Breast epithelium (tissue), 4 donors: ENCODE measurements at regions of chr6 and their contacts with region 1.

Region 1: GRCh38 chr6:9745476-9745875 is 669.4 kb downstream of the TFAP2A start:
- DNase-seq: no peak
- H3K4me3 ChIP-seq: no peak overlapping the region
- H3K27ac ChIP-seq: no peak overlapping the region
- H3K4me1 ChIP-seq: no peaks in the 10 kb centered on the region
- H3K27me3 ChIP-seq: no peaks in the 10 kb centered on the region
- CTCF ChIP-seq: no peak
- POLR2A ChIP-seq: no peak

Region 2: DNA sequence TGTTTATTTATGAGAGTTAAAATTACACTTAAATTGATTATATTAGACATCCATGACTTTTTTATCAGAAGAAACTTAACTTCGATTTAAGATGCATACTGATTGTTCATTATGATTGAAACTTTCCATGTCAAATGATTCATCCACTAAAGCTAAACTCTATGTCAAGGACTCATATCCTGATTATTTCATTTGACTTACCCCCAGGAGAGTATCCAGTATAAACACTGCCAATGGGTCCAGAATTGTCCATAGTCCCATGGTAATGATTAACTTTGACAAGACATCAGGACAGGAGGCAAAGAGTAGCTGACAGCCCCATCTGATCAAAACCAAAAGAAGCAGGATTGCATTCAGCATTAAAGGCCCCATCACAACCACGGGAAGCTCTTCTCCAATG is 40.5 kb before region 1 on chr6:
- intact Hi-C with region 1: no loop called
- DNase-seq: no peak
- H3K4me3 ChIP-seq: no peak overlapping the region
- H3K27ac ChIP-seq: no peak overlapping the region
- H3K4me1 ChIP-seq: no peaks in the 10 kb centered on the region
- H3K27me3 ChIP-seq: no peaks in the 10 kb centered on the region
- CTCF ChIP-seq: no peak
- POLR2A ChIP-seq: no peak

Region 3: DNA sequence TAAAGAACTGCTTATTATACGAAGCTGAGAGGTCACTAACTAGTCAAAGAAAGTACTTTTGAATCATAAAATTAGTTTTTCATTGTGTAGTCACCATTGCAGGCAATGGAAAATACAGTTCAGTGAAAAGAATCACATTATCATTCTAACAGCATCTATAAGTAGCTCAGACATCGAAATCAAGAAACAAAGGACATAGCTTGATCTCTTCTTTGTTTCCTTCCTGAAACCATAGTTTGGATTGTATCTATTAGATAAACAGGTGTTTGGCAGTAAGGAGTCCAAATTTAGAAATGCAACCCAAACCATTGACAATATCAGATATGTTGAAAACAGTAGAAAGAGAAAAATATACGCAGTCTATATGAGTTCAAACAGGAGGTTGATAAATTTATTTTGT is 27.9 kb before region 1 on chr6:
- intact Hi-C with region 1: no loop called
- DNase-seq: no peak
- H3K4me3 ChIP-seq: no peak overlapping the region
- H3K27ac ChIP-seq: no peak overlapping the region
- H3K4me1 ChIP-seq: no peaks in the 10 kb centered on the region
- H3K27me3 ChIP-seq: no peaks in the 10 kb centered on the region
- CTCF ChIP-seq: no peak
- POLR2A ChIP-seq: no peak

Region 4: DNA sequence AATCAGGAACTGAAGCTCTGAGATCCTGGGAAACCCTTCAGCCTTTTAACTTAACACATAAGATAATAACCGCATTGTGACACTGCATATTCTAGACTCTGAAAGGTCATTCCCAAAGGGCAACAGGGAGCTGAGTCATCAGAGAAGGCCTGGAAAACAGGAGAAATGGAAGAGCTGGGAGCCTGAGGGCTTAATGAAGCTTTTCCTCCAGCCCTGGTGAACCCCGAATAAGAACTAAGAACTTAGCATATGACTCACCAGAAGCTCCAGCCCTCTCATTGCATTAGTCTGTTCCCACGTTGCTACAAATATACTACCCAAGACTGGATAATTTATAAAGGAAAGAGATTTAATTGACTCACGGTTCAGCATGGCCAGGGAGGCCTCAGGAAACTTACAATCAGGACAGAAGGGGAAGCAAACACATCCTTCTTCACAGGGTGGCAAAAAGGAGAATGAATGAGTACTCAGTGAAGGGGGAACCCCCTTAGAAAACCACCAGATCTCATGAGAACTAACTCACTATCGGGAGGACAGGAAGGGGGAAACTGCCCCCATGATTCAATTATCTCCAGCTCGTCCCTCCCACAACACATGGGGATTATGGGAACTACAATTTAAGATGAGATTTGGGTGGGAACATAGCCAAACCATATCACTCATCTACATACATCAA is 20.9 kb after region 1 on chr6:
- intact Hi-C with region 1: loop called (anchors 2 kb)
- DNase-seq: no peak
- H3K4me3 ChIP-seq: no peak overlapping the region
- H3K27ac ChIP-seq: no peak overlapping the region
- H3K4me1 ChIP-seq: no peaks in the 10 kb centered on the region
- H3K27me3 ChIP-seq: no peaks in the 10 kb centered on the region
- CTCF ChIP-seq: no peak
- POLR2A ChIP-seq: no peak

Region 5: GRCh38 chr6:9801249-9801754 is 55.8 kb after region 1 on chr6:
- intact Hi-C with region 1: no loop called
- DNase-seq: no peak
- H3K4me3 ChIP-seq: no peak overlapping the region
- H3K27ac ChIP-seq: no peak overlapping the region
- H3K4me1 ChIP-seq: no peaks in the 10 kb centered on the region
- H3K27me3 ChIP-seq: no peaks in the 10 kb centered on the region
- CTCF ChIP-seq: no peak
- POLR2A ChIP-seq: no peak